ENCODE measurements at regions of chr6 and their contacts with region 1.

Region 1: GRCh38 chr6:4210629-4211423 is 75.5 kb upstream of the ECI2 start:
- DNase-seq: peak; percentile 65 to 72 (median 68)
- ATAC-seq: peak; percentile 97
- H3K4me3 ChIP-seq: no peak overlapping the region
- H3K27ac ChIP-seq: no peak overlapping the region
- H3K4me1 ChIP-seq: no peaks in the 10 kb centered on the region
- H3K27me3 ChIP-seq: peaks cover 0 to under 1% of the 10 kb centered on the region in 2 experiments; a peak in 1 of 5 replicates
- CTCF ChIP-seq: peak; percentile 73 to 92 (median 85)
- EP300 ChIP-seq: no peak
- POLR2A ChIP-seq: no peak
- RAD21 ChIP-seq: peak; percentile 74 to 90

Region 2: GRCh38 chr6:4162370-4162769 is 48.5 kb before region 1 on chr6:
- CTCF ChIA-PET with region 1: interaction called, 3 read pairs
- POLR2A ChIA-PET with region 1: no interaction called
- in situ Hi-C with region 1: no loop called
- intact Hi-C with region 1: loop called (anchors 1 kb)
- DNase-seq: peak in 2 of 4 experiments; percentile 27 to 42
- ATAC-seq: no peak
- H3K4me3 ChIP-seq: no peak overlapping the region
- H3K27ac ChIP-seq: no peak overlapping the region
- H3K4me1 ChIP-seq: no peaks in the 10 kb centered on the region
- H3K27me3 ChIP-seq: peaks cover 25 to 63% of the 10 kb centered on the region in 2 experiments
- CTCF ChIP-seq: peak in 2 of 3 experiments; percentile 49 to 61; a peak in 4 of 6 replicates
- EP300 ChIP-seq: no peak
- POLR2A ChIP-seq: no peak
- RAD21 ChIP-seq: peak in 1 of 2 experiments; percentile 44; a peak in 2 of 4 replicates

Measured in K562 (cell line).